ENCODE measurements at regions of chr5 and their contacts with region 1.

Region 1: DNA sequence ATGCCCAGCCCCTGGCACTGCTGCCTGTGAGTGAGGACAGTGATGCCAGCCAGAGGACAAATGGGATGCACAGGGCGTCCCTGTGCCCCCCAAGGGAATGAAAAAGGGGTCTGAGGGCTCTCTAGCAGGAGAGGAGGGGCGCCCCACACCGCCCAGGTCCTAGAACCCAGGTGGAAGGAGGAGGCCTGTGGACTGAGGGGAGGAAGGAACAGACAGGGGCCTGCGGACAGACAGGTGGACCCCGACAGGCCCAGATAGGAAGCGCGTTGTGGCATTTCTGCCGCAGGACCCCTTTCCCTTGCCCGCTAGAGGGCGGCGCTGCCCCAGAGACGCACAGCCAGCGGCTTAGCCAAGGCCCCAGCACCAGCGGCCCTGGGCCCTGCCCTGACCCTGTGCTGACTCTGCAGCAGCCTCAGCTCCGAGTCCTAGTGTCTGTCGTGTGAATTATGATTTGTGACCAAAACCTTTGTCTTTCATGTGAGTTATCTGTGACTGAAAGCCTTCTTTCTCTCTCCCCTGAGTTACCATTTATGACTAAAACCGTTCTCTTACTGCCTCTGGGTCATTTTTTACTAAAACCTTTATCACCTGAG is 30.7 kb downstream of the TRIP13 start:
- DNase-seq: peak; percentile 83
- H3K4me3 ChIP-seq: no peak overlapping the region
- H3K27ac ChIP-seq: no peak overlapping the region
- H3K4me1 ChIP-seq: peaks cover 13% of the 10 kb centered on the region
- H3K27me3 ChIP-seq: peaks cover 32% of the 10 kb centered on the region
- CTCF ChIP-seq: peak; percentile 92

Region 2: DNA sequence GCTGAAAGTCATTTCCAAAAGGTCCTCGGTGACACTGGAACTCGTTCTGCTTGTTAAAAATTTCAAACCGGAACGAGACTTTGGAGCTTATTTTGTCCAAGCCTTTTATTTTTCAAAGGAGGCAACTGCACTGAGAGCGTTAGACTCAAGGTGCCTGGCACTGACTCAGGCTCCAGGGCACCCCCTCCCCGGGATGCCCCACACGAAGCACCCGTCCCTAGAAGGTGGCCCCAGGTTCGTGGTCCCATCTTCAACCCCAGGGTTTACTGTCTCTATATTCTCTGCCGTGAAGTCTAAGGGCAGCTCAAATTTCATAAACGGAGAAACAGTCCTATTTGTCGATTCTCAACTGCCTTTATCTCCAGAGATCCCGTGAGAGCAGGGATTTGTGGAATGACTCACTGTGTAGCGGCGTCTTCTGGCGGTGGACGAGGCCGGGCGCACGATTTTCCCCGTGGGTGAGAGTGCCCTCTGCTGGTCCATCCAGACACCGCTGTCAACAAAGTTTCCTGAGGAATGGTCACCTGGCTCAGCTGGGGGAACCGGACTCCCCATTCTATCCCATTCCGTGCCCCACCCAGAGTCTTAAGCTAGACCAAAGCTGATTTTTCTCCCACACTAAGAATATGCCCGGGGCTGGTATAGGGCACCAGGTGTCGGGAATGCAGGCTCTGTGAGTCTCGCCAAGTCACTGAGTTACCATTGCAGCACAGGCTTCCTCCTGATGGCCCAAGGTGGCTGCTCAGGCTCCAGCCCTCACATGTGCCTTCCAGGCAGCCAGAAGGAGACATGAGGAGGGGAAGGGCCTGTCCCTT is 251.0 kb after region 1 on chr5:
- intact Hi-C with region 1: loop called (anchors 5 kb)
- DNase-seq: peak; percentile 61
- H3K4me3 ChIP-seq: no peak overlapping the region
- H3K27ac ChIP-seq: no peak overlapping the region
- H3K4me1 ChIP-seq: peaks cover 5% of the 10 kb centered on the region
- H3K27me3 ChIP-seq: peaks cover 4% of the 10 kb centered on the region
- CTCF ChIP-seq: peak; percentile 87